CD4-positive, alpha-beta memory T cell (primary cell): ENCODE measurements at regions of chr11 and their contacts with region 1.

Region 1: DNA sequence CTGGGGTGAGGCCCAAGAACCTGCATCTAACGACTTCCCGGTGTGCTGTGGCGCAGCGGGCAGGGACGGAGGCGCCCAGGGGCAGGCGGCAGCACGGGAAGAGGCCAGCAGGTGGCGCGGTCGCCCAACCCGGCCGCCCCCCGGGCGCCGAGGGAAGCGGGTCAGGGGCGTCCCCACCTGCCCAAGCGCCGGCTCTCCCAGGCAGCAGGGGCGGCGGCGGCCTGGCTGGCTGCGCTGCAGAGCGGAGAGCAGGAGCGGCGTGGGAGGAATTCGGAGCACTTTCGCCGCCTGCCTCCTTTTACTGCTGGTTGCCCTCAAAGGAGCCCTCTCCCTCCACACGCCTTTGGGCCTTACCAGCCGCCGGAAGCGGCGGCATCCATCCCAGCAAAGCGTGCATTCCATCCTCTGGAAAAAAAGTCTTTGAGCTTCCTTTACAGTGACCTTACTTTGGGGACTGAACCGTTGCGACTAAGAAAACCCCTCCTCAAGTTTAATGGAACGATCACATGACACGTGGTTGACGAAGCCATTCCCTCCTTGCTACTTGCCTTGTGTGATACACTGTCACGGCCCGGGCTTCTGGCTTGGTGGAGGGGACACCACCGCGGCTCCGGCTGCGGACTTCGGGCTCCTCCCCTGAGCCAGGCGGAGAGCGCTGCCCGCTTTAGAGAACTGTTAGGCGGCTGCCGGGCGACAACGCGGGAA is 106.8 kb upstream of the CLMP start:
- DNase-seq: peak; percentile 58 to 72 (median 64)
- H3K4me3 ChIP-seq: peak overlapping the region; percentile 38 to 42
- H3K4me3 Mint-ChIP-seq: peak overlapping the region; percentile 72 to 84 (median 76)
- H3K27ac ChIP-seq: peak overlapping the region; percentile 51
- H3K27ac Mint-ChIP-seq: peak overlapping the region; percentile 75 to 89 (median 83)
- H3K4me1 ChIP-seq: peaks cover 46% of the 10 kb centered on the region
- H3K4me1 Mint-ChIP-seq: peaks cover 27 to 47% (median 37%) of the 10 kb centered on the region in 4 donors
- H3K27me3 ChIP-seq: no peaks in the 10 kb centered on the region
- H3K27me3 Mint-ChIP-seq: no peaks in the 10 kb centered on the region

Region 2: DNA sequence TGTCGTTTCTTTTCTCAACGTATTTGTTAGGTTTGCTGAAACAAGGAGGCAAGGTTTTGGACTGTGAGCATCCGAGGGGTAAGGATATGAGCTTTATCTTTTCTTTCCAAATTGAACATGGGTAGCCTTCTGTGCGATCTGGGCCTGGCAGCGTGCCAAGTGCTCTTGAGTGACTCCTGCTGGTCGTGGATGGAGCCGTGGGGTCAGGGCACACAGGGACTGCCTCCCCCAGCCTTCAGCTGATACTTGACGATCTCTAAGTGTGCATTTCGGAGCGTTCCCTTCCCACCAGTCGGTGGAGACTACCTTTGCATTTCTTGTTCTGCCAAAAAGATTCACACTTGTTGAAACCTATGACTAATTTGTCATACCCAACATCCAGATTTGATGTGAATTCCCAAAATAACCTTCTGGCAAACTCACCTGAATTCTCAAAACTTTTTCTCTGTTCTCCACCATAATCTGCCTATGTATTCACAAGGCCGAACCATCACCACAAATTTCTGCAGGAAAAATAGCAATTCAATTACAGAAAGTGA is 66.7 kb before region 1 on chr11:
- CTCF ChIA-PET with region 1: no interaction called
- POLR2A ChIA-PET with region 1: no interaction called
- intact Hi-C with region 1: no loop called
- DNase-seq: peak in 4 of 5 donors; percentile 18 to 36 (median 26)
- H3K4me3 ChIP-seq: no peak overlapping the region
- H3K4me3 Mint-ChIP-seq: peak overlapping the region in 1 of 8 donors; percentile 33
- H3K27ac ChIP-seq: no peak overlapping the region
- H3K27ac Mint-ChIP-seq: no peak overlapping the region
- H3K4me1 ChIP-seq: peaks cover 14% of the 10 kb centered on the region
- H3K4me1 Mint-ChIP-seq: peaks cover 17 to 23% (median 21%) of the 10 kb centered on the region in 4 donors
- H3K27me3 ChIP-seq: no peaks in the 10 kb centered on the region
- H3K27me3 Mint-ChIP-seq: peaks cover 0 to 3% of the 10 kb centered on the region in 2 donors

Region 3: GRCh38 chr11:123357961-123358841 is 56.4 kb after region 1 on chr11:
- CTCF ChIA-PET with region 1: interaction called, 9 read pairs
- POLR2A ChIA-PET with region 1: interaction called, 6 read pairs
- intact Hi-C with region 1: loop called (anchors 5 kb)
- DNase-seq: peak in 4 of 5 donors; percentile 9 to 33 (median 25)
- H3K4me3 ChIP-seq: peak overlapping the region; percentile 42 to 59
- H3K4me3 Mint-ChIP-seq: peak overlapping the region; percentile 83 to 96 (median 89)
- H3K27ac ChIP-seq: no peak overlapping the region
- H3K27ac Mint-ChIP-seq: peak overlapping the region in 5 of 7 donors; percentile 9 to 76 (median 38)
- H3K4me1 ChIP-seq: peaks cover 17% of the 10 kb centered on the region
- H3K4me1 Mint-ChIP-seq: peaks cover 21 to 31% (median 24%) of the 10 kb centered on the region in 4 donors
- H3K27me3 ChIP-seq: no peaks in the 10 kb centered on the region
- H3K27me3 Mint-ChIP-seq: peaks cover 15 to 30% of the 10 kb centered on the region in 2 donors

Region 4: GRCh38 chr11:123478352-123478987 is 176.6 kb after region 1 on chr11:
- CTCF ChIA-PET with region 1: interaction called, 62 read pairs
- POLR2A ChIA-PET with region 1: no interaction called
- intact Hi-C with region 1: loop called (anchors 1 kb)
- DNase-seq: peak in 4 of 5 donors; percentile 49 to 71 (median 56)
- H3K4me3 ChIP-seq: no peak overlapping the region
- H3K4me3 Mint-ChIP-seq: peak overlapping the region in 7 of 8 donors; percentile 49 to 79 (median 63)
- H3K27ac ChIP-seq: no peak overlapping the region
- H3K27ac Mint-ChIP-seq: peak overlapping the region in 4 of 7 donors; percentile 4 to 61 (median 56)
- H3K4me1 ChIP-seq: peaks cover 9% of the 10 kb centered on the region
- H3K4me1 Mint-ChIP-seq: peaks cover 6 to 14% (median 11%) of the 10 kb centered on the region in 4 donors
- H3K27me3 ChIP-seq: no peaks in the 10 kb centered on the region
- H3K27me3 Mint-ChIP-seq: no peaks in the 10 kb centered on the region